PC-3 (cell line): ENCODE measurements at regions of chr7 and their contacts with region 1.

Region 1: GRCh38 chr7:102111061-102111743 is 175.5 kb upstream of the SH2B2 start:
- DNase-seq: no peak
- ATAC-seq: no peak
- H3K4me3 ChIP-seq: no peak overlapping the region
- H3K27ac ChIP-seq: no peak overlapping the region
- H3K4me1 ChIP-seq: no peaks in the 10 kb centered on the region
- H3K27me3 ChIP-seq: no peaks in the 10 kb centered on the region
- CTCF ChIP-seq: no peak

Region 2: GRCh38 chr7:102132209-102132752 is 21.1 kb after region 1 on chr7:
- CTCF ChIA-PET with region 1: no interaction called
- POLR2A ChIA-PET with region 1: no interaction called
- intact Hi-C with region 1: no loop called
- DNase-seq: no peak
- ATAC-seq: no peak
- H3K4me3 ChIP-seq: no peak overlapping the region
- H3K27ac ChIP-seq: no peak overlapping the region
- H3K4me1 ChIP-seq: peaks cover 13% of the 10 kb centered on the region
- H3K27me3 ChIP-seq: no peaks in the 10 kb centered on the region
- CTCF ChIP-seq: no peak

Region 3: DNA sequence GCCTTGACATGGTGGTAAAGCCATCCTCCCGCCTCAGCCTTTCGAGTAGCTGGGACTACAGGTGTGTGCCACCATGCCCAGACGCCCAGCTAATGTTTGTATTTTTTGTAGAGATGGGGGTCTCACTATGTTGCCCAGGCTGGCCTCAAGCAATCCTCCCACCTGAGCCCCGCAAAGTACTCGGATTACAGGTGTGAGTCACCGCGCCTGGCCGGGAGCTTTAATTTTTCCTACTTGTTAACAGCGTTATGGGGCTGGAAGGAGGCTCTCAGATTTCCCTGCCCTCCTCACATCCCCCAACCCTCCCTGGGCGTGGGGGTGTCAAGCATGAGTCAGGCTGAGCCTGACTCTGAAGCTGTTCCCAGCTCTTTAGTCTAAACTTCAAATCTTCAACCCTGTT is 345.1 kb after region 1 on chr7:
- CTCF ChIA-PET with region 1: interaction called, 10 read pairs
- POLR2A ChIA-PET with region 1: no interaction called
- intact Hi-C with region 1: no loop called
- DNase-seq: peak; percentile 67
- ATAC-seq: peak; percentile 86
- H3K4me3 ChIP-seq: no peak overlapping the region
- H3K27ac ChIP-seq: peak overlapping the region; percentile 29
- H3K4me1 ChIP-seq: peaks cover 6% of the 10 kb centered on the region; the same call in 1 of the 2 replicates
- H3K27me3 ChIP-seq: no peaks in the 10 kb centered on the region
- CTCF ChIP-seq: no peak